H1 (cell line): ENCODE measurements at regions of chr19 and their contacts with region 1.

Region 1: GRCh38 chr19:56252699-56253422 is 19.7 kb upstream of the EDDM13 start:
- DNase-seq: peak; percentile 73 to 98
- H3K4me3 ChIP-seq: no peak overlapping the region; a peak in 1 of 8 replicates
- H3K27ac ChIP-seq: no peak overlapping the region
- H3K4me1 ChIP-seq: no peaks in the 10 kb centered on the region
- H3K27me3 ChIP-seq: no peaks in the 10 kb centered on the region; a peak in 1 of 7 replicates
- CTCF ChIP-seq: peak; percentile 90 to 97 (median 97)
- EP300 ChIP-seq: no peak
- POLR2A ChIP-seq: no peak
- RAD21 ChIP-seq: peak; percentile 79 to 81

Region 2: GRCh38 chr19:56066152-56067023 is 186.5 kb before region 1 on chr19:
- CTCF ChIA-PET with region 1: interaction called, 19 read pairs
- POLR2A ChIA-PET with region 1: interaction called, 3 read pairs
- DNase-seq: peak in 1 of 2 experiments; percentile 94
- H3K4me3 ChIP-seq: peak overlapping the region in 2 of 4 experiments; percentile 5 to 48; a peak in 4 of 8 replicates
- H3K27ac ChIP-seq: no peak overlapping the region
- H3K4me1 ChIP-seq: peaks cover 0 to 3% (median 0%) of the 10 kb centered on the region in 4 experiments; a peak in 2 of 7 replicates
- H3K27me3 ChIP-seq: no peaks in the 10 kb centered on the region; a peak in 1 of 7 replicates
- CTCF ChIP-seq: peak; percentile 84 to 93 (median 89)
- EP300 ChIP-seq: no peak
- POLR2A ChIP-seq: no peak
- RAD21 ChIP-seq: peak; percentile 83

Region 3: DNA sequence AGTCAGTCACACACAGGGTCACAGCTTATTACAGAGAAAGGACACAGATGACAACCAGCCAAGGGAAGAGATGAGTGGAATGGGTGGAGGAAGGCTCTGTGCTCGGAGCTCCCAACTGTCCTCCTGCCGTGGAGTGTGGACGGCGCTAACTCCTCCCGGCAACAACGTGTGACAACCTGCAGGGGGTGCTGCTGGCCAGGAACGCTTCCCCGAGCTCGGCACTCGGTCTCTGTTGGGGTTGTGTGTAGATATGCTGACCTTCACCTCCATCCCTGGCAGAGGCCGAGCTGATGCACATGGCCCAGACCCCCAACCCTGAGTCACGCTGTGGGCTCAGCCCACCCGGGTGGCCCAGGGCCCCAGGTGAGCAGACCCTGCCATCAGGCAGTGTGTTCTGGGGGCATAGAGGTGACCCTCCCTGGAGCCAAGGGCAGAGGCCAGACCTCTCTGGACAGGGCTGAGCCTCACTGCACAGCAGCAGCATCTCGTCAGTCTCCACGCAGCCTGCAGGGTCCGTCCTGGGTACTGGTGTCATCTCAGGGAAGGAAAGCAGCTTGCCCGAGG is 97.7 kb before region 1 on chr19:
- CTCF ChIA-PET with region 1: interaction called, 76 read pairs
- POLR2A ChIA-PET with region 1: no interaction called
- DNase-seq: peak in 1 of 2 experiments; percentile 87
- H3K4me3 ChIP-seq: no peak overlapping the region
- H3K27ac ChIP-seq: 0 out of 2 replicates have a peak overlapping the region, but pooled peaks have one; percentile 11
- H3K4me1 ChIP-seq: peaks cover 5 to 10% (median 8%) of the 10 kb centered on the region in 4 experiments
- H3K27me3 ChIP-seq: no peaks in the 10 kb centered on the region
- CTCF ChIP-seq: peak; percentile 87 to 97 (median 96)
- EP300 ChIP-seq: no peak
- POLR2A ChIP-seq: no peak
- RAD21 ChIP-seq: peak; percentile 85 to 88

Region 4: GRCh38 chr19:56221399-56221798 is 31.5 kb before region 1 on chr19:
- CTCF ChIA-PET with region 1: interaction called, 31 read pairs
- POLR2A ChIA-PET with region 1: no interaction called
- DNase-seq: no peak
- H3K4me3 ChIP-seq: no peak overlapping the region
- H3K27ac ChIP-seq: no peak overlapping the region
- H3K4me1 ChIP-seq: peaks cover 0 to 8% (median 4%) of the 10 kb centered on the region in 4 experiments; a peak in 6 of 7 replicates
- H3K27me3 ChIP-seq: no peaks in the 10 kb centered on the region; a peak in 1 of 7 replicates
- CTCF ChIP-seq: peak; percentile 22 to 50 (median 42)
- EP300 ChIP-seq: no peak
- POLR2A ChIP-seq: no peak
- RAD21 ChIP-seq: peak in 1 of 2 experiments; percentile 40; a peak in 3 of 4 replicates

Region 5: DNA sequence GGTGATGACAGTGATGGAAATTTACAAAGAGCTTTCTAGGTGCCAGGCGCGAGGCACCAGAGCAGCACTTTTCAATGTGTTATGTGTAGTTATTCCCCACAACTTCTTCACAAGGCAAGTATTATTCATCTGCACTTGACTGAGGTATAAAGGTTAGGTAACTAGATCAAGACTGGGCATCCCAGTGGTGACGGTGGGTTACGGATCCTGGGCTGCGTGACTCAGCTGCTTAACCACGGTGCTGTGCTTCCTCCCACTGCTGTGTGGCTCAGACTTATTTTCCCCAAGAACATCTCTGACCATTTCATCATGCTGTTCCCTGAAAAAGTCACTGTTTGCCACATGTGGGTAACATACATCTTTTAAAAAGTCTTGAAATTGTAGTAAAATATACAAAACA is 39.0 kb after region 1 on chr19:
- CTCF ChIA-PET with region 1: interaction called, 10 read pairs
- POLR2A ChIA-PET with region 1: no interaction called
- DNase-seq: no peak
- H3K4me3 ChIP-seq: no peak overlapping the region
- H3K27ac ChIP-seq: no peak overlapping the region
- H3K4me1 ChIP-seq: no peaks in the 10 kb centered on the region; a peak in 1 of 7 replicates
- H3K27me3 ChIP-seq: no peaks in the 10 kb centered on the region
- CTCF ChIP-seq: no peak
- EP300 ChIP-seq: no peak
- POLR2A ChIP-seq: no peak
- RAD21 ChIP-seq: no peak

Region 6: GRCh38 chr19:56333505-56333904 is 80.6 kb after region 1 on chr19:
- CTCF ChIA-PET with region 1: interaction called, 26 read pairs
- POLR2A ChIA-PET with region 1: no interaction called
- DNase-seq: peak in 1 of 2 experiments; percentile 49
- H3K4me3 ChIP-seq: no peak overlapping the region
- H3K27ac ChIP-seq: no peak overlapping the region
- H3K4me1 ChIP-seq: no peaks in the 10 kb centered on the region
- H3K27me3 ChIP-seq: no peaks in the 10 kb centered on the region
- CTCF ChIP-seq: peak in 2 of 3 experiments; percentile 59 to 61; a peak in 3 of 4 replicates
- EP300 ChIP-seq: no peak
- POLR2A ChIP-seq: no peak
- RAD21 ChIP-seq: peak; percentile 81